Activated CD4-positive, alpha-beta memory T cell treated with anti-CD3 and anti-CD28 coated beads, Interleukin-2, amount 10 ng/mL, durations not matched to agents 7 days and 5 days (primary cell): ENCODE measurements at regions of chr2 and their contacts with region 1.

Region 1: GRCh38 chr2:105789745-105790460 is 45.2 kb downstream of the NCK2 start:
- DNase-seq: peak; percentile 84
- H3K4me3 Mint-ChIP-seq: peak overlapping the region; percentile 70
- H3K27ac Mint-ChIP-seq: peak overlapping the region; percentile 99
- H3K4me1 Mint-ChIP-seq: peaks cover 94% of the 10 kb centered on the region
- H3K27me3 Mint-ChIP-seq: no peaks in the 10 kb centered on the region

Region 2: GRCh38 chr2:105576440-105577252 is 213.3 kb before region 1 on chr2:
- CTCF ChIA-PET with region 1: interaction called, 63 read pairs
- POLR2A ChIA-PET with region 1: interaction called, 3 read pairs
- DNase-seq: no peak
- H3K4me3 Mint-ChIP-seq: no peak overlapping the region
- H3K27ac Mint-ChIP-seq: peak overlapping the region; percentile 10
- H3K4me1 Mint-ChIP-seq: peaks cover 23% of the 10 kb centered on the region
- H3K27me3 Mint-ChIP-seq: peaks cover 7% of the 10 kb centered on the region

Region 3: GRCh38 chr2:105744091-105744908 is 45.6 kb before region 1 on chr2:
- CTCF ChIA-PET with region 1: interaction called, 46 read pairs
- POLR2A ChIA-PET with region 1: interaction called, 97 read pairs
- DNase-seq: peak; percentile 68
- H3K4me3 Mint-ChIP-seq: peak overlapping the region; percentile 77
- H3K27ac Mint-ChIP-seq: peak overlapping the region; percentile 83
- H3K4me1 Mint-ChIP-seq: peaks cover 74% of the 10 kb centered on the region
- H3K27me3 Mint-ChIP-seq: no peaks in the 10 kb centered on the region

Region 4: GRCh38 chr2:105749583-105750400 is 40.1 kb before region 1 on chr2:
- CTCF ChIA-PET with region 1: interaction called, 46 read pairs
- POLR2A ChIA-PET with region 1: interaction called, 97 read pairs
- DNase-seq: peak; percentile 57
- H3K4me3 Mint-ChIP-seq: peak overlapping the region; percentile 95
- H3K27ac Mint-ChIP-seq: peak overlapping the region; percentile 90
- H3K4me1 Mint-ChIP-seq: peaks cover 82% of the 10 kb centered on the region
- H3K27me3 Mint-ChIP-seq: no peaks in the 10 kb centered on the region

Region 5: DNA sequence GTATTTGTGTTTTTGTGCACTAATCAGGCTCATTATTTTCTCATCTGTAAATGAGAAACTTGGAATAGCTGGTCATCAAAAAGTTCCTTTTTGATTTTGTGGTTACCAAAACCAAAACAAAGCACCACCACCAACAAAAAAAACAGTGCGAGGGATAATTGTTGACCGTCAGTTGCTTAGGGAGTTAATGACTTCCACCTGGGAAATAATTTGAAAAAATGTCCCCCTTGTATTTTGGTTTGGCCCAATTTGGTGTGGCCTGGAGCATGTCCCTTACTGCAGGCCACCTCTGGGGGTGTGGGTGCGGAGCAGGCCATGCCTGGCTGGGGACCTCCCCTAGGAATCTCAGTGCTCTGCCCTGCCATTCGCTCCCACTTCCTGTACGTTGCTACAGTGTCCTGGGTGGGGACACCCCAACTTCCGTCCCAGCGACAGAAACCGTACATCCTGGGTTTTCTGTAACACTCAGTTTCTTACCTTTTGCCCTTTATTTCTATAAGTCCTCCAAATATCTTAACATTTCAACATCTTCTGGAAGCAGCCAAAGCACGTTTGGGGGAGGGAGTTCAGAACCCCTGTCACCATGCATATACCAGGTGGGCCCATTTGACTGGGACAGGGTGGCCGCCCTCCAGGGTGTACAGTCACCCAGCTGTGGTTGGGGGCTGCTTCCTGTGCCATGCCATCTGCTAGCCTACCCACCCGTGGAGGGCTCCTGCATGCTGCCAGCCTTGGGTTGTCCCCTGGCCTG is 13.9 kb before region 1 on chr2:
- CTCF ChIA-PET with region 1: interaction called, 71 read pairs
- POLR2A ChIA-PET with region 1: interaction called, 30 read pairs
- DNase-seq: peak; percentile 50
- H3K4me3 Mint-ChIP-seq: peak overlapping the region; percentile 69
- H3K27ac Mint-ChIP-seq: peak overlapping the region; percentile 92
- H3K4me1 Mint-ChIP-seq: peaks cover 92% of the 10 kb centered on the region
- H3K27me3 Mint-ChIP-seq: no peaks in the 10 kb centered on the region

Region 6: GRCh38 chr2:105812180-105813044 is 22.5 kb after region 1 on chr2:
- CTCF ChIA-PET with region 1: interaction called, 10 read pairs
- POLR2A ChIA-PET with region 1: interaction called, 6 read pairs
- DNase-seq: no peak
- H3K4me3 Mint-ChIP-seq: no peak overlapping the region
- H3K27ac Mint-ChIP-seq: no peak overlapping the region
- H3K4me1 Mint-ChIP-seq: peaks cover 55% of the 10 kb centered on the region
- H3K27me3 Mint-ChIP-seq: no peaks in the 10 kb centered on the region

Region 7: GRCh38 chr2:105857076-105857740 is 67.3 kb after region 1 on chr2:
- CTCF ChIA-PET with region 1: interaction called, 21 read pairs
- POLR2A ChIA-PET with region 1: interaction called, 9 read pairs
- DNase-seq: peak; percentile 50
- H3K4me3 Mint-ChIP-seq: peak overlapping the region; percentile 73
- H3K27ac Mint-ChIP-seq: peak overlapping the region; percentile 90
- H3K4me1 Mint-ChIP-seq: peaks cover 80% of the 10 kb centered on the region
- H3K27me3 Mint-ChIP-seq: no peaks in the 10 kb centered on the region